SK-N-SH (cell line): ENCODE measurements at regions of chr17 and their contacts with region 1.

Region 1: DNA sequence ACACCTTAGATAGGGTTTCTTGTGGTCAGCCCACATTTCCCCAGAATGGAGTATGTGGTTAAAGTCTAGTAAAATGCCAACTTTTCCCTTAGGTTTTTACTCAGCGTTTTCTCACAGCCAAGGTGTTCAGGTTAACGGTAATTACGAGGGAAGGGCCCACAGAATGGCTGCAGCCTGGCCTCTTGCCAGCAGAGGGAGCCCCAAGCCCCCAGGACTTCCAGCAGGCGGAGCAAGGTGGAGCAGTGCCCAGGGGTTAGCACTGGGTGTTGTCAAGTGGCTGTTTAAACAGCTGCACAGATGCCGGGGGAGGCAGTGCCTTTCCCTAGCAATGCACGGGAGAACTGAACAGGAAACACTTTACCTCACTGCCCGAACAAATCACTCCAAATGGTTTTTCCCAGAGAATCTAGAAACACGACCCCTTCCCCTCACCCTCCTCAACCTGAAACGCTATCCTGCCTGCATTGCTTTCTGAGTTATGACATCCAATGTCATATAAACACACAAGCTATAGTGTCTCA is 6.6 kb downstream of the PHB1 start:
- DNase-seq: peak; percentile 92
- H3K4me3 ChIP-seq: peak overlapping the region in 1 of 2 experiments; percentile 27; a peak in 1 of 4 replicates
- H3K27ac ChIP-seq: no peak overlapping the region
- H3K4me1 ChIP-seq: peaks cover 0 to 4% of the 10 kb centered on the region in 2 experiments; a peak in 1 of 4 replicates
- H3K27me3 ChIP-seq: no peaks in the 10 kb centered on the region
- CTCF ChIP-seq: peak; percentile 100
- EP300 ChIP-seq: no peak
- RAD21 ChIP-seq: peak; percentile 86

Region 2: DNA sequence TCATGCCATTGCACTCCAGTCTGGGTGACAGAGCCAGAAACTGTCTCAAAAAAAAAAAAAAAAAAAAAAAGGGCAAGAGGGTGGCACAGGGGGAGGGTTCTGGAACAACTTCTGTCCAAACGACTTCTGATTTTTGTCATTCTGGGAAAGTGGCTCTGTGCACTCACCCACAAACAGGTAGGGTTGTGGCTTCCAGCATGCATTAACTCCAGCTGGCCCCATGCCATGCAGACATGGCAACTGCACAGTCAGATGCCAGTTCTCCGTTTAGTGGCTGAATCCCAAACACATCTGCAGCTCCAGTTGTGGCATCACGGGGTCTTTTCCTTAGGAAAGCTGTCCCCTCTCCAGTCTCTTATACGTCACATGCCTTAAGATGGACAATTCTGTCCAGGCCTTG is 245.2 kb before region 1 on chr17:
- CTCF ChIA-PET with region 1: no interaction called
- POLR2A ChIA-PET with region 1: no interaction called
- DNase-seq: no peak
- H3K4me3 ChIP-seq: no peak overlapping the region
- H3K27ac ChIP-seq: no peak overlapping the region
- H3K4me1 ChIP-seq: no peaks in the 10 kb centered on the region
- H3K27me3 ChIP-seq: peaks cover 87% of the 10 kb centered on the region
- CTCF ChIP-seq: no peak
- EP300 ChIP-seq: no peak
- RAD21 ChIP-seq: no peak

Region 3: DNA sequence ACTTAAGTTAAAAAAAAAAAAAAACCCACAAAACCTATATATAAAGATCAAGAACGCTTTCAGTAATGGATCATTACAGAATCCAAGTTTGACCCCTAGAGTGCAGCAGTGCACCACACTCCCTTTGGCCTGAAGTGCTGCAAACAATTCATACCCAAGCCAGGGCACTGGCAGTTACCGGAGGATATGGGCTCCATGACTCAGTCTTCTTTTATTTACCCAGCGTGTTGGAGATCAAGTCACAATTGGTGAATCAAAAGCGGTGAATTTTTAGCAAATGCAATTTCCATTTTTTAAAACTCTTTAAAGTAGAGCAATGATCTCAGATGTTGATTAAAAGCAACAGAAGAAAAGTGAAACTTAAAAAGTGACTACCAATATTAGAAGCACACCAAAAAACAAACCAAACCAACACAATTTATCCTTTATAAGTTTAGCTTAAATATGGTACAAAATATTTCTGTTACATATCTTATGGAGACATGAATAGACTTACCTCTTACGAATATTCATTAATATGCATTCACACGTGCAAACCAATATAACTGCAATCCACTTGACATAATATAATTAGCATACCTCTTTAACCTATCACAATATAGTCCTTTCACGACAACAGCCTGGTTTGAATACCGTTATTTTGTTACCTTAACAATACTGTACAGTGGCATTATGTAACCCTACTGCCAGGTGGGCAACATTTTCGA is 92.3 kb before region 1 on chr17:
- CTCF ChIA-PET with region 1: interaction called, 154 read pairs
- POLR2A ChIA-PET with region 1: no interaction called
- DNase-seq: peak; percentile 77
- H3K4me3 ChIP-seq: peak overlapping the region in 1 of 2 experiments; percentile 9; a peak in 1 of 4 replicates
- H3K27ac ChIP-seq: peak overlapping the region; percentile 11 to 59; a peak in 3 of 4 replicates
- H3K4me1 ChIP-seq: peaks cover 0 to 8% of the 10 kb centered on the region in 2 experiments
- H3K27me3 ChIP-seq: no peaks in the 10 kb centered on the region
- CTCF ChIP-seq: peak; percentile 100
- EP300 ChIP-seq: peak in 1 of 2 experiments; percentile 32; a peak in 1 of 4 replicates
- RAD21 ChIP-seq: peak; percentile 100

Region 4: DNA sequence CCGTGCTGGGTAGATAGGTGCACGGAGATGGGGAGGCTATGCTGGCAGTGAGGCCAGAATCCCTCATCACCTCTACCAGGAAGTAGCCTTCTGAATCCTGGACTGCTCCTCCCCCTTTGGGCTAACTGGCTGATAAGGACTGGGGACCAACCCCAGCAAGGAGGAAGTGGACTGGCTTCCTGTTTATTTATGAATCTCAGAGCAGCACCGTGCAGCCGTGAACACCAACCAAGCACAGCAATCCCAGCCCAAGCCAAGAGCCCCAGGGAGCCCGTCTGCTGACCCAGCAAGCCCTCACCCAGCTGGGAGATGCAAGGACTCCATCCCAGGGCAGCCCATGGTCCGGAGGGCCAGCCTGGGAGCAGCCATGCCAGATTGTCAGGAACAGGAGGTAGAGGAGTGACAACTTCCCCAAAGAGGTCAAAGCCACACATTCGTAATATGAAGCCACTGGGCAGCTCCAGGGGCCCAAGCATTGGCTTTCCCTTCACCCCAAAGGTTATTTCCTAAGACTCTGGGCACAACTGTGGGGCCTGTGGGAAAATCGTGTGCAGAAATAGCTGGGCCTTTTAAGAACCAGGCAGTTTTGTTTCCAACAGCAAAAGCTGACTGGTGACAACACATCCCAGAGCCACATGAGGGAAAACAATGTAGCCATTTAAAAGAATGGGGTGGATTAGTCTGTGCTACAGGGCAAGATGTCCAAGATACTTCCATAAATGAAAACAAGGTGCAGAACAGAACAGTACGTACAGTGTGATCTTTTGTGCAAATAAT is 17.3 kb before region 1 on chr17:
- CTCF ChIA-PET with region 1: interaction called, 78 read pairs
- POLR2A ChIA-PET with region 1: no interaction called
- DNase-seq: no peak
- H3K4me3 ChIP-seq: no peak overlapping the region
- H3K27ac ChIP-seq: no peak overlapping the region
- H3K4me1 ChIP-seq: no peaks in the 10 kb centered on the region; a peak in 1 of 4 replicates
- H3K27me3 ChIP-seq: no peaks in the 10 kb centered on the region
- CTCF ChIP-seq: no peak
- EP300 ChIP-seq: no peak
- RAD21 ChIP-seq: no peak

Region 5: DNA sequence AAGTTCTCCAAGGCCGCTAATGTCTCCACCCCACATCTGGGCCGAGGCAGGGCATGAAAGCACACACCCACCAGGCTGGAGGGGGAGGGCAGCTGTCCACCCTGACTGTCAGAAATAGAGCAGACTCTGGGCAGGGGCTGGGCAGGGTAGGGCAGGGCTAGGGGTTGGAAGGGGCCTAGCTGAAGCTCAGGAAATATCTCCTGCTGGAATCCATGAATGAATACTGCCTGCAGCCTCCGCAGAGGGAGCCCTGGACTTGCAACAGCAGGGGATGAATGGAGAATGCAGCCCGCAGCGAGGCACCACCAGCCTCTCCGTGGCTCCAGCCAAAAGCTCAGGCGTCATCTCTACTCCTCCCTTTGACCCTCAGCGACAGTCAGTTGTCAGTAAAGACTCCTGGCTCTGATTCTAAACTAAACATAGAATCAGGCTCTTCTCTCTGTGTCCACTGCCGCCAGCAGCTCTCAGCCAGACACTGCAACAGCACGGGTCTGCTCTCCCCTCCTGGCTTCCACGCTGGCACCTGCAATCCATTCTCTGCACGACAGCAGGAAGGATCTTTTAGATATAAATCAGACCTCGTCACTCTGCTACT is 63.1 kb after region 1 on chr17:
- CTCF ChIA-PET with region 1: interaction called, 12 read pairs
- POLR2A ChIA-PET with region 1: no interaction called
- DNase-seq: peak; percentile 87
- H3K4me3 ChIP-seq: no peak overlapping the region
- H3K27ac ChIP-seq: peak overlapping the region in 1 of 2 experiments; percentile 82; a peak in 2 of 4 replicates
- H3K4me1 ChIP-seq: peaks cover 0 to 32% of the 10 kb centered on the region in 2 experiments; a peak in 1 of 4 replicates
- H3K27me3 ChIP-seq: peaks cover 68% of the 10 kb centered on the region
- CTCF ChIP-seq: no peak
- EP300 ChIP-seq: no peak
- RAD21 ChIP-seq: peak; percentile 44

Region 6: DNA sequence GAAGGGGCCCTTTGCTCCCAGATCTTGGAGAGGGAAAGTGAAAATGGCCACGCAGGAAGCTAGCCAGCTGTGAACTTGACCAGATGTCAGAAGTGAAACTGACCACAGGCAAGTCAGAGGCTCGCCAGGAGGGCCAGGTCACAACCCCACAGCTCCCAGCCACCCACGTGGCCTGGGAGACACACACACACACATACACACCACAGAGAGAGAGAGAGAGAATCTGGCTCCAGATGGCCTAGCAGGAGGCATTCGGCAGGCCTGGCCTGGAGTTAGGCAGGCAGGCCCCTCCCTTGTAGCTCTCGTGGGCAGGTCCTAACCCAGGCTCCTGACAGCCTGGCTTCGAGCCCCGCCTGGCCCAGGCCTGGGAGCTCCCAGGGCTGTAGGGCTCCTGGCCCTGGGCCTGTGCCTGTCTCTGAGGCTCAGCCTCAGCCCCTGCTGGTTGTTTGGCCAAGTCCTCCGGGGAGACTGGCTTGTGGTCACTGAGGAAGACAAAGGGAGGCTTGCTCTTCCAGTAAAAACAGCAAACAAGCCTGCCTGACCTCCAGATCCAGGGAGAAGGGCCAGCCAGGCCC is 107.2 kb after region 1 on chr17:
- CTCF ChIA-PET with region 1: interaction called, 38 read pairs
- POLR2A ChIA-PET with region 1: no interaction called
- DNase-seq: peak; percentile 97
- H3K4me3 ChIP-seq: no peak overlapping the region
- H3K27ac ChIP-seq: peak overlapping the region; percentile 15 to 99; a peak in 3 of 4 replicates
- H3K4me1 ChIP-seq: peaks cover 7 to 76% of the 10 kb centered on the region in 2 experiments
- H3K27me3 ChIP-seq: peaks cover 2% of the 10 kb centered on the region; the same call in 1 of the 2 replicates
- CTCF ChIP-seq: no peak
- EP300 ChIP-seq: peak in 1 of 2 experiments; percentile 94; a peak in 2 of 4 replicates
- RAD21 ChIP-seq: peak; percentile 46; the same call in 1 of the 2 replicates

Region 7: GRCh38 chr17:49548506-49549310 is 140.7 kb after region 1 on chr17:
- CTCF ChIA-PET with region 1: interaction called, 496 read pairs
- POLR2A ChIA-PET with region 1: no interaction called
- DNase-seq: peak; percentile 73
- H3K4me3 ChIP-seq: no peak overlapping the region; a peak in 1 of 4 replicates
- H3K27ac ChIP-seq: peak overlapping the region in 1 of 2 experiments; percentile 30; a peak in 1 of 4 replicates
- H3K4me1 ChIP-seq: peaks cover 0 to 43% of the 10 kb centered on the region in 2 experiments; a peak in 1 of 4 replicates
- H3K27me3 ChIP-seq: peaks cover 8% of the 10 kb centered on the region
- CTCF ChIP-seq: peak; percentile 68
- EP300 ChIP-seq: no peak
- RAD21 ChIP-seq: peak; percentile 81

Region 8: GRCh38 chr17:49656247-49656646 is 248.2 kb after region 1 on chr17:
- CTCF ChIA-PET with region 1: no interaction called
- POLR2A ChIA-PET with region 1: no interaction called
- DNase-seq: no peak
- H3K4me3 ChIP-seq: no peak overlapping the region
- H3K27ac ChIP-seq: no peak overlapping the region
- H3K4me1 ChIP-seq: no peaks in the 10 kb centered on the region
- H3K27me3 ChIP-seq: no peaks in the 10 kb centered on the region
- CTCF ChIP-seq: no peak
- EP300 ChIP-seq: no peak
- RAD21 ChIP-seq: no peak